Heart right ventricle (tissue), 16 donors: ENCODE measurements at regions of chr15 and their contacts with region 1.

Region 1: DNA sequence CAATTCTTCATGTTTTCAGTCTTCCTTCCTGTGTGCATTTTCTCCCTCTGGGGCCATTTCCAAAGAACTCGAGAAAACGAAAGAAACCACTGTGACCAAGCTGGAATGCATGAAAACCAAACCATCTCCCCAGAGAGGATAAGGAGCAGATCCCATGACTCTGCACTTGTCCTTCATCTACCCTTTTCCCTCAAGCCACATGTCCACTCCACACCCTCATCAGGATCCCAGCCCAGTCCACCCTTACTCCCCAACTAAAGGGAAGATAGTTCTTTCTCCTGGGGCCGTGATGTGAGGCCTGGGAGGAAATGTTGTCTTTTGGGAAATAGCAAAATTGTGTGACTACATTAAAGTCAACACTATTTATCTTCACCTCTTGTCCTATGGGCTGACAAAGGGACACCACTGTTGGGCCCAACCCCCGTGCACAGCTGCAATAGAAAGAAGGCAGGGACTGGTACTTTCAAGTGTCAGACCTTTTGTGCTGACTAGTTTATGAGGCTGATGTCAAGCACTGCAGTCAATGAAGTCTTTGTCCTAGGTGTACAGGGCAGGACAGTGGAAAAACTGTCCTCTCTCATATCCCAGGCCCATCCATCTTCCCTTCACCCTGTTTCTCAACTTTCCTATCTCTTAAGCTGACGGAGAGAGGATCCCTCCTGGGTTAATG is 487.1 kb upstream of the NR2F2 start:
- DNase-seq: peak; percentile 24 to 53
- ATAC-seq: peak; percentile 64 to 88 (median 80)
- H3K4me3 ChIP-seq: no peak overlapping the region
- H3K27ac ChIP-seq: peak overlapping the region in 8 of 10 donors; percentile 12 to 70 (median 54)
- H3K4me1 ChIP-seq: peaks cover 0 to 21% (median 6%) of the 10 kb centered on the region in 9 donors
- H3K27me3 ChIP-seq: no peaks in the 10 kb centered on the region
- CTCF ChIP-seq: no peak

Region 2: GRCh38 chr15:95259513-95259912 is 583.9 kb before region 1 on chr15:
- intact Hi-C with region 1: loop called in 1 of 10 experiments (anchors 10 kb)
- DNase-seq: peak; percentile 28 to 77
- ATAC-seq: peak in 7 of 8 donors; percentile 72 to 93 (median 83)
- H3K4me3 ChIP-seq: no peak overlapping the region
- H3K27ac ChIP-seq: peak overlapping the region in 7 of 10 donors; percentile 16 to 58 (median 41)
- H3K4me1 ChIP-seq: peaks cover 0 to 25% (median 11%) of the 10 kb centered on the region in 9 donors
- H3K27me3 ChIP-seq: peaks cover 0 to 16% (median 4%) of the 10 kb centered on the region in 7 donors
- CTCF ChIP-seq: peak; percentile 67 to 90 (median 82)

Region 3: DNA sequence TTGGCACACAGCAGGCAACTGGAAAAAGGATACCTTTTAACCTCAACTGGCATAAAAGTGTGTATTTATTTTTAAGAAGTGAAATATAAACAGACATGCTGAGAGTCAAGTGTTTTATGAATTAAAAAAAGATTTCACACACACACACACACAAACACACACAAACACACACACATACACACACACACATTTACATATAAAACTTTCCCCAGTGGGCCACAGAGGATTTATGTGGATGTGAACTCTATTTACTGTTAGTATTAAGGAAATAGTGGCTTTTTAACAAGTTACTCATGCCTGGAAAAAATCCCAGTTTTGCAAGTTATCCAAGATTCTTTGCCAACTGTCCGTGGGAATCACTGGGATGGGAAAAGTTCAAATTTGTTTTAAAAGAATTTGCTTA is 238.7 kb before region 1 on chr15:
- intact Hi-C with region 1: loop called in 1 of 10 experiments (anchors 5 kb)
- DNase-seq: peak in 1 of 2 donors; percentile 61
- ATAC-seq: peak in 7 of 8 donors; percentile 47 to 89 (median 72)
- H3K4me3 ChIP-seq: no peak overlapping the region
- H3K27ac ChIP-seq: peak overlapping the region in 8 of 10 donors; percentile 3 to 73 (median 60)
- H3K4me1 ChIP-seq: peaks cover 0 to 28% (median 15%) of the 10 kb centered on the region in 9 donors
- H3K27me3 ChIP-seq: no peaks in the 10 kb centered on the region
- CTCF ChIP-seq: no peak

Region 4: GRCh38 chr15:95663146-95664100 is 180.0 kb before region 1 on chr15:
- intact Hi-C with region 1: loop called in 1 of 10 experiments (anchors 2 kb)
- DNase-seq: no peak
- ATAC-seq: no peak
- H3K4me3 ChIP-seq: no peak overlapping the region
- H3K27ac ChIP-seq: peak overlapping the region in 1 of 10 donors; percentile 25
- H3K4me1 ChIP-seq: peaks cover 0 to 10% (median 0%) of the 10 kb centered on the region in 9 donors
- H3K27me3 ChIP-seq: peaks cover 0 to 5% (median 0%) of the 10 kb centered on the region in 7 donors
- CTCF ChIP-seq: no peak